ENCODE measurements at regions of chr21 and their contacts with region 1.

Region 1: GRCh38 chr21:36429947-36430546 is 44.9 kb downstream of the CHAF1B start:
- DNase-seq: peak; percentile 99
- ATAC-seq: peak; percentile 94
- H3K4me3 ChIP-seq: peak overlapping the region; percentile 69
- H3K27ac ChIP-seq: peak overlapping the region; percentile 97
- H3K4me1 ChIP-seq: peaks cover 30% of the 10 kb centered on the region
- H3K27me3 ChIP-seq: no peaks in the 10 kb centered on the region
- CTCF ChIP-seq: 0 out of 2 replicates have a peak, but pooled peaks have one; percentile 24

Region 2: DNA sequence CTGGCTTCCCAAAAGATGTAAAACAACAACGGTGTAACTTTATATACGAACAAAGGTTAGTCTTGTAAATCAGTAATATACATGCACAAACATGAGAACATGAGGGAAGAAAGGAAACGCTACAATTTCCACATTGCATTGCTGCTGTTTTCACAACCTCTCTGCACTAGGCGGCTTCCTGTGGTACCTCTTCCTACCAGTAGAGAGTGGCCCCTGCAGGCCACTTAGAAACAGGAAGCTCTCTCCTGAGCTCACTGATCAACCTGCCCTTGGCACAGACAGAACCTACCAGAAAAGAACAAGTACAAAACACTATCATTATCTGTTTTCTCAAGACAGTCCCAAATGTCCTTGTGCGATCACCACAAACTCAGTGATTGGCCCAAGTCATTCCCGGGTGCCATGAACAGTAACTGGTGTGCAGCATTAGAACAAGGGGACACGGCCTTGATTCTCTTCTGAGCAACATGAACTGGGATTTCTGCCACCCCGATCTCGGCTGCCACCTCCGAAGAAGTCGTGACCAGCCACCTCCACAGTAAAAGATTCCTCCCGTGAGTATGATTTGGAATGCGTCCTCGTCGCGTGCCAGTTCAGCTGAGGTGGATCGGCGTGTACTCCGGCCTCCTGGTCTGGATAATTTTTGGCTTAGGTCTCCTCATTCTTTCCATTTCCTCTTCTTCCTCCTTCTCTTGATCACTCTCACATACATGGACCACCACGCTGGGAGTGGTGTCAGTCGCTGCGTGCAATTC is 1912.4 kb before region 1 on chr21:
- CTCF ChIA-PET with region 1: interaction called, 10 read pairs
- POLR2A ChIA-PET with region 1: no interaction called
- intact Hi-C with region 1: no loop called
- DNase-seq: peak; percentile 25
- ATAC-seq: peak; percentile 74
- H3K4me3 ChIP-seq: no peak overlapping the region
- H3K27ac ChIP-seq: no peak overlapping the region
- H3K4me1 ChIP-seq: no peaks in the 10 kb centered on the region
- H3K27me3 ChIP-seq: no peaks in the 10 kb centered on the region
- CTCF ChIP-seq: peak; percentile 59

Region 3: DNA sequence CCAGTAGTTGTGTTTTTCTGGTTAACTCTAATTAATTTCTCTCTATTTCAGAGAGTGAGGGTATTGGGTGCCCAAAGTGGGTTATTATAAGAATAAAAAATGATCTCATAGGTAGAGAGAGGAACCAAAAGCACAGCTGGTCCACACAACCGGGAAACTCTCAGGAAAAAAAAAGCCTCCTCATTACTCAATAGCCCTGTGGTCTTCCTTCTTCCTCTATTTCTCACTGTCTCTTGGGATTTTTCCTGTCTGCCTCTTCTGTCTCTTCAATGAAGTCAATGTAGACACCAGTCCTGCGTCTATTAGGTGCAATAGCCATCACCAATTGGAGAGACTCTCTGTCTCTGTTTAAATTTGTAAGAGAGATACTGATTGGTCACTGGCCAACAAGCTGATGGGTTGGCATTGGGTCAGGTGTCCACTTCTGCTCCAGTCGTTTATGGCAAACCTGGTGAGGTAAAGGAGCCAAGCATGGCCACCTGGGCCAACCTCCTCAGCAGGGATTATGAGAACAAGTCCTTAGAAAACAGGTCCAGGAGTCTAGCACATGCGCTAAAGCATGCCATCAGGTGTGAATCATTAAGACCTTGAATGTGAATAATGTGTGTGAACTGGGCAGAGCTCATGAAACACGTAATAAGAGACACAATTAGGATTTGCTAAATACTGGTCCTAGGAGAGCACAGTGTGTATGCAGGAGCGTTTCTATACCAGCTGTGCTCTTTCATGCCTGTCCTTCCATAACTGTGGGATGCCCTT is 937.9 kb before region 1 on chr21:
- CTCF ChIA-PET with region 1: interaction called, 14 read pairs
- POLR2A ChIA-PET with region 1: no interaction called
- intact Hi-C with region 1: no loop called
- DNase-seq: no peak
- ATAC-seq: no peak
- H3K4me3 ChIP-seq: no peak overlapping the region
- H3K27ac ChIP-seq: no peak overlapping the region
- H3K4me1 ChIP-seq: peaks cover 6% of the 10 kb centered on the region; the same call in 1 of the 2 replicates
- H3K27me3 ChIP-seq: no peaks in the 10 kb centered on the region
- CTCF ChIP-seq: no peak

Region 4: GRCh38 chr21:36459098-36459497 is 29.1 kb after region 1 on chr21:
- CTCF ChIA-PET with region 1: no interaction called
- POLR2A ChIA-PET with region 1: interaction called, 16 read pairs
- intact Hi-C with region 1: no loop called
- DNase-seq: no peak
- ATAC-seq: no peak
- H3K4me3 ChIP-seq: no peak overlapping the region
- H3K27ac ChIP-seq: peak overlapping the region; percentile 45; the same call in 1 of the 2 replicates
- H3K4me1 ChIP-seq: peaks cover 22% of the 10 kb centered on the region
- H3K27me3 ChIP-seq: no peaks in the 10 kb centered on the region
- CTCF ChIP-seq: no peak

Region 5: DNA sequence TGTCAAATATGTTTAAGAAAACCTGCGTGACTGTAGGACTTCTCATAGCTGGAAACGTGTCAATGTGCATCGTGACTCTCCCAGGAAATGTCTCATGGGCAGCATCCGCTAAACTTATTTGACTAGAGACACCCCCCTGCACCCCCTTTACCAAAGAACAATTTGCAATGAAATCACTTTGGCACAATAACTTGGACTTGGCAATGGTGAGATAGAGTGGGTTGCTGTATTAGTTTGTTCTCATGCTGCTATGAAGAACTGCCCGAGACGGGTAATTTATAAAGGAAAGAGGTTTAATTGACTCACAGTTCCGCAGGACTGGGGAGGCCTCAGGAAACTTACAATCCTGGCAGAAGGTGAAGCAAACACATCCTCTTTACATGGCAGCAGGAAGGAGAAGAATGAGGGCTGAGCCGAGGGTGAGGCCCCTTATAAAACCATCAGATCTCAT is 36.0 kb after region 1 on chr21:
- CTCF ChIA-PET with region 1: no interaction called
- POLR2A ChIA-PET with region 1: interaction called, 9 read pairs
- intact Hi-C with region 1: loop called (anchors 1 kb)
- DNase-seq: peak; percentile 89
- ATAC-seq: peak; percentile 61
- H3K4me3 ChIP-seq: peak overlapping the region; percentile 29; the same call in 1 of the 2 replicates
- H3K27ac ChIP-seq: peak overlapping the region; percentile 97
- H3K4me1 ChIP-seq: peaks cover 60% of the 10 kb centered on the region
- H3K27me3 ChIP-seq: no peaks in the 10 kb centered on the region
- CTCF ChIP-seq: no peak

Region 6: GRCh38 chr21:37503848-37504467 is 1073.9 kb after region 1 on chr21:
- CTCF ChIA-PET with region 1: no interaction called
- POLR2A ChIA-PET with region 1: no interaction called
- intact Hi-C with region 1: no loop called
- DNase-seq: peak; percentile 53
- ATAC-seq: peak; percentile 76
- H3K4me3 ChIP-seq: no peak overlapping the region
- H3K27ac ChIP-seq: peak overlapping the region; percentile 11
- H3K4me1 ChIP-seq: peaks cover 4% of the 10 kb centered on the region; the same call in 1 of the 2 replicates
- H3K27me3 ChIP-seq: no peaks in the 10 kb centered on the region
- CTCF ChIP-seq: no peak